Aorta (tissue), 5 donors: ENCODE measurements at regions of chr7 and their contacts with region 1.

Region 1: GRCh38 chr7:38107486-38107893 is 70.6 kb upstream of the STARD3NL start:
- DNase-seq: peak; percentile 50 to 76
- ATAC-seq: peak; percentile 85
- H3K4me3 ChIP-seq: no peak overlapping the region
- H3K27ac ChIP-seq: no peak overlapping the region
- H3K4me1 ChIP-seq: no peaks in the 10 kb centered on the region
- H3K27me3 ChIP-seq: no peaks in the 10 kb centered on the region

Region 2: DNA sequence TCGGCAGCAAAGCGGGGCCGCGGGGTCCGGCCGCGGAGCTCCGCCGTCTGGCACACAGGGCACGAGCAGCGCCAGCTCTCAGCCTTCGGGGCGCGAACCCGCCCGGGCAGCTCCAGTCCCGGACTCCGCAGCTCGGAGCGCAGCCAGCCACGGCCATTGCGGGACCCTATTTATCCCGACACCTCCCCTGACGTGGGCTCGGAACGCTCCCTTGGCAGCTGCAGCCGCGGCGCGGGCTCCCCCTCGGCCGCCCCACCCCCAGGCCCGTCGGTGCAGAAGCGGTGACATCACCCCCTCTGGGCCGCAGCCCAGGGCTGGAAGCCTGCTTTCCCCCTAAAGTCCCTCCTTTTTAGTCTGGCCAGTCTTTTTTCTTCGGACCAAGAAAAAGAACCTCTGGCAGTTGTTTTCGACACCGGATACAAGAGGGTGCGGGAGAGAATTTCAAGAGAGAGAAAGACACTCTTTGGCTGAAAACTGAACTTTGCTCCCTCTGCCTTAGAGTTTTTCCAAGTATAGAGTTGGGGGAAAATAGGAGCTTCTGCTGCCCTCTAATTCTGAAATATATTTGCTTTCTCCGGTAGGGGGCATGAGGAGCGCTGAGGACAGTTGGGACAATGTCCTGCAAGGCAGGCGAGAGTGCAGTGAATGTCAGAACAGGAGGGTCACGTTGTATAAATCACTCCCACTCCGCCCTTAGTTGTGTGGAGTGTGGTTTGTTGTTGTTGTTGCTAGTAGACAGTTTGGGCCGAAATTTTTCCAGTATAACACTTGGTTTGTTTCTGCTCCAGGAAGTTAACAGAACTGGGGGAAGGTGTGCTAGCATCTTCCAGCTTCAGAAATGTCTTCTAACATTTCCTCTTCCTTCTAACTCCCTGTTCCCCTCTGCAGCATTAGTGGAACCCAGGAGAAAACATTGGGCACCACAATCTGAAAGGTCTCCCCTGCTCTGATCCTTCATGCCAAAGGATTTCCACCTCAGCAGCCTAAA is 190.5 kb before region 1 on chr7 and contains the start of gene SFRP4:
- intact Hi-C with region 1: loop called in 1 of 2 experiments (anchors 5 kb)
- DNase-seq: peak; percentile 88 to 93
- ATAC-seq: peak; percentile 89
- H3K4me3 ChIP-seq: peak within 1 kb of the TSS; percentile 35 to 41
- H3K27ac ChIP-seq: peak within 1 kb of the TSS; percentile 24 to 53
- H3K4me1 ChIP-seq: peaks cover 0 to 4% of the 10 kb centered on the region in 2 donors
- H3K27me3 ChIP-seq: no peaks in the 10 kb centered on the region
- total RNA-seq, gene SFRP4: 98.6 to 302 TPM

Region 3: DNA sequence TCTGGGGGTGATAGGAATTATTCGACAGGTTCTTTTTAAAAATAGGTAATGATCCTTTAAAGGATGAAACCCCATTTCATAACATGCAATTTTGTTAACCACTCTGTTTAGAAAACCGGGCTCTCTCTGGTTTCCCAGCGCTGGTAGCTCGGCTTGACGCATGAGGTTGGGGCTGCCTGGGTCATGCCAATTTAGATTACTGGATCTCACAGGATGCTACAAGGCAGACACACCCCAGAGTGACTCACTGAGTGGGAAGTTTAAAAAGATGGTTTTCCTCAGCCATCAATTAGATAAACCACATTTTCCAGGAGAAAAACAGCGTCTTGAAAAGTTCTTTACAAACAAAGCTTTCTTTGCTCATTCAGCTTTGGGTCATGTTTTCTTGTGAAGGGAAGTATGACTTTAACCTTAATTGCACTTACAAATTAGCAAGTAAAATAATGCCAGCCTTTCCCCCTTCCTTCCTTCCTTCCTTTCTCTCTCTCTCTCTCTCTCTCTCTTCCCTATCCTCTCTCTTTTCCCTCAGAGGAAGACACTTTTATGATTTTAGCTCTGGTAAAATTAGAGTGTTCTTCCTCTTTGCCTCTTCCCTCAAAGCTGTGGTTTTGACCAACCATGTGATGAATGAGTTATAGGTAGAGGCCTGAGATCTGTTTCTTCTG is 87.2 kb before region 1 on chr7:
- intact Hi-C with region 1: no loop called
- DNase-seq: peak in 1 of 2 donors; percentile 42
- ATAC-seq: no peak
- H3K4me3 ChIP-seq: no peak overlapping the region
- H3K27ac ChIP-seq: no peak overlapping the region
- H3K4me1 ChIP-seq: no peaks in the 10 kb centered on the region
- H3K27me3 ChIP-seq: no peaks in the 10 kb centered on the region

Region 4: DNA sequence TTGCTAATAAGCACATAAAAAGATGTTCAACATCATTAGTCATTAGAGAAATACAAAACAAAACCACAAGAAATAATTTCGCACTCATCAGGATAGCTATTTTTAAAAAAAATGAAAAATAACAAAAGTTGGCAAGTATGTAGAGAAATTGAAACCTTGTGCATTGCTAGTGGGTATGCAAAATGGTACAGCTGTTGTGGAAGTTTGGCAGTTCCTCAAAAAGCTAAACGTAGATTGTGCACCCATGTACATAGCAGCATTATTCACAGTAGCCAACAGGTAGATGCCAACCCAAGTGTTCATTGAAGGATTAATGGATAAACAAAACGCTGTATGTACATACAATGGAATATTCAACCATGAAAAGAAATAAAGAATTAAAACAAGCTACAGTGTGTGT is 35.2 kb after region 1 on chr7:
- intact Hi-C with region 1: no loop called
- DNase-seq: no peak
- ATAC-seq: no peak
- H3K4me3 ChIP-seq: no peak overlapping the region
- H3K27ac ChIP-seq: no peak overlapping the region
- H3K4me1 ChIP-seq: no peaks in the 10 kb centered on the region
- H3K27me3 ChIP-seq: no peaks in the 10 kb centered on the region

Region 5: DNA sequence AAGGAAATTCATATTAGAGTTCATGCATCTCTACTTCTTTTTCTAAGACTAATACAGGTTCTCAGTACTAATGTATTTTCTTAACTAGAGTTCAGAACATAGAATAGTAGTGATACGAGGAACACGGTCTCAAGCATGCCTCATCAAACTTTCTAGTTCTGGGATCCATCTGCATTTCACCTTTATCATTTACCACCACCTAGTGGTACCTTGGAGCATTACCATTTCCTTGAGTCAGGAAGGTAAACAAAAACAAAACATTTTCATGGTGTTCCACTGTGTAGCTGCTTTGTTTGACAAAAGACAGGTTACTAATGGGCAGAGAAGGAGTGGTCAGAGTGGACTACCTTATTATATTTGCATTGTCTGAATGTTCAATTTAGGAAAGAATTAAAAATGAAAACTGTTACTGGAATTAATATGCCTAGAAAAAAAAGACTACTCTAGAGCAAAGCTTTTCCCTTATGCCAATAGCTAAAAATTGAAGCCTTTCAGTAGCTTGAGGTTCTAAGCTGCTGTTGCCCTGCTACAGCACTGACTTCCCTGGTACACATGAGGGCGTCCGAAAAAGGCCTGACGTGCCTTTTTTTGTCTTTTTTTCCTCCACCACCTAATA is 115.1 kb after region 1 on chr7:
- intact Hi-C with region 1: loop called (anchors 2 kb)
- DNase-seq: no peak
- ATAC-seq: peak; percentile 88
- H3K4me3 ChIP-seq: no peak overlapping the region
- H3K27ac ChIP-seq: peak overlapping the region in 1 of 2 donors; percentile 22
- H3K4me1 ChIP-seq: peaks cover 0 to 2% of the 10 kb centered on the region in 2 donors
- H3K27me3 ChIP-seq: no peaks in the 10 kb centered on the region